Heart right ventricle (tissue), 16 donors: ENCODE measurements at regions of chr2 and their contacts with region 1.

Region 1: GRCh38 chr2:210318891-210319290 is 3.9 kb upstream of the MYL1 start:
- DNase-seq: no peak
- ATAC-seq: no peak
- H3K4me3 ChIP-seq: no peak overlapping the region
- H3K27ac ChIP-seq: no peak overlapping the region
- H3K4me1 ChIP-seq: no peaks in the 10 kb centered on the region
- H3K27me3 ChIP-seq: no peaks in the 10 kb centered on the region
- CTCF ChIP-seq: no peak

Region 2: DNA sequence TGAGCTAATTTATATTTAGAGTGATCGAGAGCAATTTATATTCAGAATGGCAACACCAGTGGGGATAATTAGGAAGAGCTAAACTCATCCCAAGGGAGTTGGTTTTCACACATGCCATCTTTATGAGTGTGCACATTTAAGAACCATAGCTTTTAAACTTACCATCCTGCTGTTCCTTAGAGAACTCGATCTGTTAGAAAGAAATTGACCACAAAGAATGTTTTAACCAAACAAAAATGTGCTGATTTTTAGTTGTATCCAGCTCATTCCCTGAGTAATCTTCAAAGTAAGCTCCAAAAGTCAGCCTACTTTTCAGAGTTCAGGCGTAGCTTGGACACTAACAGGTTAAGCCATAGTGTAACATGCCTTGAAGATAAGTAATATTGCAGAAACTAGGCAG is 16.6 kb before region 1 on chr2:
- intact Hi-C with region 1: loop called in 1 of 10 experiments (anchors 1 kb)
- DNase-seq: no peak
- ATAC-seq: no peak
- H3K4me3 ChIP-seq: no peak overlapping the region
- H3K27ac ChIP-seq: no peak overlapping the region
- H3K4me1 ChIP-seq: no peaks in the 10 kb centered on the region
- H3K27me3 ChIP-seq: no peaks in the 10 kb centered on the region
- CTCF ChIP-seq: no peak